ENCODE measurements at regions of chr4 and their contacts with region 1.

Region 1: GRCh38 chr4:139030614-139031235 is 15.1 kb downstream of the NOCT start:
- DNase-seq: peak; percentile 73
- CTCF ChIP-seq: peak; percentile 82

Region 2: DNA sequence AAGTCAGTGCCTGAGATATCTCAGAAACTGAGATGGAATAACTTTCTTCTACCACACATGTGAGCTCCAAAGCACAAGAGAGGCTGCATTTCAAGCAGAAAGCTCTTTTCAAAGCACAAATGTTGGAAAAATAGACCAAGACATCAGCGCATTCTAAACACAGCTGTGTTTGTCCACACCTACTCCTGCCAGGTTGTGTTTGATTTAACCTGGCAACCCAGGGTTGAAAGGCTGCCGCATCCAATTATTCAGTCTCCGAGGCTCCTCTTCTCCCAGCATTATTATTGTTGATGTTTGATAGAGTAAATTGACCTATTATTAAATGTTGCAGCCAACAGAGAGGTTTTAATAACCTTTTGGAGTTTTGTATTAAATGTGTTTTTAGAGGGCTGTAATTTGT is 120.5 kb before region 1 on chr4:
- CTCF ChIA-PET with region 1: no interaction called
- POLR2A ChIA-PET with region 1: no interaction called
- DNase-seq: no peak
- CTCF ChIP-seq: no peak

Region 3: DNA sequence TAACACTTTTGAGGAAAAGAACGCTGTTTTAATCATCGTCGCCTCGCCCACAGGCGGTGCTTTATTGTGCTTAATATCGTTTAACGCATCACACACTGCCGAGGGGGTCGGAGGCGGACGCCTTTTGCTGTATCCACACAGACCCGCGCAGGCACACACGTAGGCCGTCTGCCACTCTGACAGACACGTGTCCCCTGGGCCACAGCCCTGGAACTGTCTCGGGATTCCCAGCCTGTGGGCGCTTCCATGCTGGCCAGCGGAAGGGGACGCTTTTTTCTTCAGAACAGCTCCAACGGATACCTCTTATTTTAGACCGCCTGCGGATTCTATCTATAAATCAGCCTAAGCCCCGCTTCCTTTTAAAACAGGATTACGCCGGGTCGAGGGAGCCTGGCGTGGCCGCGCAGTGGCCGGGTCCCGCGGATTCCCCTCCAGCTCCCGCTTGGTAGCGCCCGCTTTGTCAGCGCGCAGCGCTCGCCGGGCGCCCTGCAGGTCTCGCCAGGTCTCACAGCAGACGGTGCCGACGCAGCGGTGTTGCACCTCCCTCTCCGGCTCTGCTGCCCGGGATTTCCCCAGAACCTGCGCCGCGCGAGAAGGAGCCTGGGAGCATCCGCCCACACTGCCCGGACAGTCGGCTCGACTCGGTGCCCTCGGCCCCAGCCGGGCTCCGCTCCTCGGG is 15.3 kb before region 1 on chr4 and contains the start of gene NOCT:
- CTCF ChIA-PET with region 1: interaction called, 143 read pairs
- POLR2A ChIA-PET with region 1: interaction called, 8 read pairs
- DNase-seq: peak; percentile 96
- CTCF ChIP-seq: peak; percentile 6

Region 4: DNA sequence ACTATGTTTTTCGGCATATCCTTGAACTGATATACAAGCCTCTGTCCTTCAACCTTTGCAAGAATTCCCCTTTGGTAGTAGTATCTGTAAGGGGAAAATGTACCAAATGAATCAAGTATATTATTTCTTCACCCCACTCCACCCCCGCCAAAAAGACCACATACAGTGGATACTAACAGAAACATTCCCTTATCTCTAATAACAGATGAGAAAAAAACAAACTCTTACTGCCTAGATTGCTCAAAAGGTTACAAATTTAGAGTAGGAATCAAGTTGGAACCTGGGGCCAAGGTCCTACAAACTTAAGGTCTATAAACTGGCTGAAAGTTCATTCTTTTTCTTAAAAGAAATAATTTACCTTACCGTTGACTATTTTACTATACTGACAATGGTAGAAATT is 29.9 kb after region 1 on chr4:
- CTCF ChIA-PET with region 1: interaction called, 13 read pairs
- POLR2A ChIA-PET with region 1: interaction called, 3 read pairs
- DNase-seq: no peak
- CTCF ChIP-seq: no peak

Region 5: DNA sequence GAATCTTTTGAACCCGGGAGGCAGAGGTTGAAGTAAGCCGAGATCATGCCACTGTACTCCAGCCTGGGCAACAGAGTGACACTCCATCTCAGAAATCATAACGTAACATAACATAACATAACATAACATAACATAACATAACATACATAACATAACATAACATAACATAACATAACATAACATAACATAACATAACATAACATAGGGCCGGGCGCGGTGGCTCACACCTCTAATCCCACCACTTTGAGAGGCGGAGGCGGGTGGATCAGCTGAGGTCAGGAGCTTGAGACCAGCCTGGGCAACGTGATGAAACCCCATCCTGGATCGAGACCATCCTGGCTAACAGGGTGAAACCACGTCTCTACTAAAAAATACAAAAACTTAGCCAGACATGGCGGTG is 61.5 kb after region 1 on chr4:
- CTCF ChIA-PET with region 1: interaction called, 23 read pairs
- POLR2A ChIA-PET with region 1: no interaction called
- DNase-seq: no peak
- CTCF ChIP-seq: no peak

Region 6: DNA sequence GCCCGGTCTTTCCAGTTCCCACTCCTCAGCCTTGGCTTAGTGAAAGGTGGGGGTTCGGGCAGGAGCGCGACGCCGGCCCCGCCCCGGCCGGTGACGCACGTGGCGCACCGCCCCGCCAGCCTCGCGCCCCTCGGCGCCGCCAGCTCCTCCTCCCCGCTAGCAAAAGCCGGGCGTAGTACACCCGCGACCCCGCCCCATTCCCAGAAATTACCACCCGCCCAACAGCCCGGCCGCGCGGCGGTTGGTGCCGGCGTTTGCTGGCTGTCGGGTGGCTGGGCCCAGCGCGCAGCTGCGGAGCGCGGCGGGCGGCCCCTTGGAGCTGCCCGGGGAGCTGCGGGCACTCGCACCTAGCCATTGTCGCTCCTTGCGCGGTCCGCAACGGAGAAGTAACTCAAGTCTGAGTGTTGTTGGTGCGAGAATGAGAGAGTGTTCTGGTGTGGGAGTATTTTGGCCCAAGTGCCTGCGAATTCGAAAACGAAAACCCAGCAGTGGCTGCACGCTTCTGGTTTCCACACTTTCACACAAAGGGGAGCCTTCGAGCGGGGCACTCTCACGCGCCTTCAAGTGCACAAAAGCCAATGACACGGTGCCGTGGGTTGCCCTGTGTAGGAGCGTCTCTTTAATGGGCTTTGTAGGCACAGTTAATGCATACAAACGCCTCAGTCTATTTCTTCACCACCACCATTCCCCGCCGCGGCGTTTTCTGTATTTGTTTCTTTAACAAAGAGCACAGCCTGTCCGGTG is 147.3 kb after region 1 on chr4:
- CTCF ChIA-PET with region 1: interaction called, 19 read pairs
- POLR2A ChIA-PET with region 1: no interaction called
- DNase-seq: peak; percentile 90
- CTCF ChIP-seq: no peak

Region 7: GRCh38 chr4:139266583-139267257 is 236.0 kb after region 1 on chr4:
- CTCF ChIA-PET with region 1: no interaction called
- POLR2A ChIA-PET with region 1: no interaction called
- DNase-seq: peak; percentile 88
- CTCF ChIP-seq: no peak

Region 8: GRCh38 chr4:139295206-139295941 is 264.6 kb after region 1 on chr4:
- CTCF ChIA-PET with region 1: interaction called, 43 read pairs
- POLR2A ChIA-PET with region 1: interaction called, 9 read pairs
- DNase-seq: peak; percentile 89
- CTCF ChIP-seq: peak; percentile 98

Region 9: GRCh38 chr4:139656614-139657486 is 626.1 kb after region 1 on chr4:
- CTCF ChIA-PET with region 1: interaction called, 35 read pairs
- POLR2A ChIA-PET with region 1: no interaction called
- DNase-seq: peak; percentile 59
- CTCF ChIP-seq: peak; percentile 51

Measured in GM10248 (cell line).